Activated CD4-positive, alpha-beta T cell treated with anti-CD3 and anti-CD28 coated beads, Interleukin-2, amount 10 ng/mL, durations not matched to agents 24 days and 14 days (primary cell): ENCODE measurements at regions of chr4 and their contacts with region 1.

Region 1: DNA sequence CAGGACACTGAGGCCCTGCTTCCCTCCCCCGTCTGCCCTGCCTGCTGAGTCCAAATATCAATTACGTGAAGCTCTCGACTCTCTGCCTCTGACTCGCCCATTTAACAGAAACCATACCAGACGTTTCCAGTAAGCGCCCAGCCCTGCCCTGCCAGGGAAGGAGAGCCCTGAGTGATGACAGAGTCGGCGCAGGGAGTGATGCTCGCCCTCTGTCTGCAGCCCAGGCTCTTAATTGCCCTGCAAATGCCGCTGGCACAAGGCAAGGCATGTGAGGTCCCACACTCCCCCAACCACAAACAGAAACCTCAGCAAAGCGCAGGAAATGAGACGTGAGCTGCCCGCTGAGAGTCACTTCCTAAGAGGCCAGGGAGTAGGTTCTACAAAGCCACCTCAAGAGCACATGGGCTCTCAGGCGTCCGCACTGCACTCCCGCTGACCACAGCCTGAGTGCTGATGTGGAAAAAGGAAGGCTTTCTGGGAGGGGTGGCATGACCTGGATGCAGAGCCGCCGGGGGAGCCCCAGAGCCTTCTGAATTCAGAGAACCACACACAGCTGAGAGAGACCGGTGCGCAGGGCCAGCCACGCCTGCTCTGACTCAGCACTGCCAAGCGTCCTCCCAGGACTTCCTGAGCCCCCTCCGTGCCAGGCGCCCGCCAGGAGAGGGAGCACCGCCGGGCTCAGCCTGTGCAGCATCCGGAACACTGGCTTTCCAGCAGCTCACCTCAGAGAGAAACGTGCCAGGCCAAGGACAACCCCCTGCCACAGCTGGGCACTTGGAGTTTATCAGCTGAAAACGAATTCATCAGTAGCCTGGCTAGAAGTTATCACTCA is 5.3 kb downstream of the ZFYVE28 start:
- DNase-seq: peak; percentile 97
- H3K4me3 Mint-ChIP-seq: peak overlapping the region; percentile 78
- H3K27ac Mint-ChIP-seq: peak overlapping the region; percentile 91
- H3K4me1 Mint-ChIP-seq: peaks cover 64% of the 10 kb centered on the region
- H3K27me3 Mint-ChIP-seq: peaks cover 23% of the 10 kb centered on the region

Region 2: DNA sequence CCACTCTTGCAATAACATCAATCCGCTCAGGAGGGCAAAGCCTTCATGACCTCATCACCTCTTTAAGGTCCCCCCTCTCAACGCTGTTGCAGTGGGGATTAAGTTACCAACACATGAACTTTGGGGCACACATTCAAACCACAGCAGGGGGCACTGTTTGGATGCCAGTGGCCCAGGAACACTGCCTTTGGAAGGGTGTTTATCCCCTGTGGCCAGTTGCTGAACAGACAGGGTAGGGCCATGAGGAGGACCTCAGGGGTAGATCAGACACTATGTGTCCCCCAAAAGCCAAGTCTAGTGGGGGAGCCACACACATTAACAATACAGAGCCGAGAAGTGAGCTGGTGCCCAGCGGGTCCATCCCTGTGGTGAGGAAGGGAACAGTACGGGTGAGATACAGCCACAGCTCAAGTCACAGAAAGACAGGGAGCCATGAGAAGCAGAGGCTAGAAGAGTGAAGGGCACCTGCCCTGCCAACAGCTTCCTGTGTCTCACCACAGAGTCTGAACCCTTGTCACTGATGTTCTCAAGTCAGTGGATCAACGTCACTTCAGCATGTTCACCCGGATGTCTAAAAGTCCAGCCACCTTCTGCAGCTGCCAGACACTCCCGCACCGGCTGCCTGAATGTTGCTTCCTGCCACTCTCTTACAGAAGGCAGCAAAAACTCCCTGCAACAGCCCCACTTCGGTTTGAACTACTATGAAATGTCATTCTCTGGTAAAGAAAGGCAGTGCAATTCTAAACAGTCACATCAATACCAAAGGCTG is 131.3 kb before region 1 on chr4:
- intact Hi-C with region 1: loop called (anchors 2 kb)
- DNase-seq: peak; percentile 93
- H3K4me3 Mint-ChIP-seq: peak overlapping the region; percentile 78
- H3K27ac Mint-ChIP-seq: peak overlapping the region; percentile 94
- H3K4me1 Mint-ChIP-seq: peaks cover 26% of the 10 kb centered on the region
- H3K27me3 Mint-ChIP-seq: no peaks in the 10 kb centered on the region

Region 3: GRCh38 chr4:2371765-2372487 is 41.2 kb before region 1 on chr4:
- intact Hi-C with region 1: no loop called
- DNase-seq: no peak
- H3K4me3 Mint-ChIP-seq: no peak overlapping the region
- H3K27ac Mint-ChIP-seq: no peak overlapping the region
- H3K4me1 Mint-ChIP-seq: no peaks in the 10 kb centered on the region
- H3K27me3 Mint-ChIP-seq: no peaks in the 10 kb centered on the region

Region 4: GRCh38 chr4:3531879-3532713 is 1119.0 kb after region 1 on chr4 and contains the start of gene LRPAP1:
- intact Hi-C with region 1: loop called (anchors 5 kb)
- DNase-seq: peak; percentile 96
- H3K4me3 Mint-ChIP-seq: peak within 1 kb of the TSS; percentile 100
- H3K27ac Mint-ChIP-seq: peak within 1 kb of the TSS; percentile 97
- H3K4me1 Mint-ChIP-seq: peaks cover 21% of the 10 kb centered on the region
- H3K27me3 Mint-ChIP-seq: peaks cover 15% of the 10 kb centered on the region
- total RNA-seq, gene LRPAP1: 76.1 and 81.6 TPM in 2 replicates